ENCODE measurements at regions of chrX and their contacts with region 1.

Region 1: DNA sequence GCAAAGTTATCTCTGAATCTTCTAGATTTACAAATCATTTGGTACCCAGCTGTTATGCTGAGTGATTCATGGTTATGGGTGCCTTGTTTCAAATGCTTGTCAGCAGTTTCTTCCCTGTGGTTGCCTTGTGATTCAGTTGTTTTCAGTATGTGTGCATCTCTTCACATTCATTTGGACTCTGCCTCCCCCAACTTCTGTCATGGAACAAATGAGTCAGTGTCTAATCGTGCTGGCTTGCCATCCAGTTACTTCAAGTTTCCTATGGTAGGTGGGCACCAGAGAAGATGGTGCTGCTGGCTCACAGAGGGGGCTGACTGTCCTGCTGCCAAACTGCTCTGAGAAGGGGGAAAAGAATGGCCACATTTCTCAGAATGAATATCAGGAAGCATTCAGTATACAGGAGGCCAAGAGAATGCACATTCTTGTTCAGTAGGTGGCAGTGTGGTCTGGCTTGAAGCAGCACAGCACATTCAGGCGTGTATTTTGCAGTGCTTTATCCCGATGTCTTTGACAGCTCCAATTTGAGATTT is 260.9 kb downstream of the GLUD2 start:
- DNase-seq: peak in 1 of 3 donors; percentile 27
- ATAC-seq: peak; percentile 49
- H3K4me3 ChIP-seq: no peak overlapping the region
- H3K4me1 ChIP-seq: no peaks in the 10 kb centered on the region
- CTCF ChIP-seq: no peak

Region 2: DNA sequence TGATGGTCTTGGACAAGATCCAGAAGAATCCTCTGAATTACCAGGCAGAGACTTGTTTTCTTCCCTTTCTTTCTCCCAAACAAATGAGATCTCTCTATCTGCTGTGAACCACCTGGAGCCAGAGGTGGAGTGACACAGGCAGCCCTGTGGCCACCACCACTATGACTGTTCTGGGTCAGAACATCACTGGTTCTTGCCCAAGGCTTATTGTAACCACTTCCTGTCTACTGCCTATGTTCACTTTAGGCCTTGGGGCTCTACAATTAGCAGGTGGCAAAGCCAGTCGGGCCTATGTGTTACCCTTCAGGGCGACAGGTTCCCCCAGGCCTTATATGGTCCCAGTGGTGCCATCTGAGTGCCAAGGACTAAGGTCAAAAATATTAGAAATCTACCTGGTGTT is 99.8 kb before region 1 on chrX:
- intact Hi-C with region 1: no loop called
- DNase-seq: no peak
- ATAC-seq: no peak
- H3K4me3 ChIP-seq: no peak overlapping the region
- H3K4me1 ChIP-seq: no peaks in the 10 kb centered on the region
- CTCF ChIP-seq: no peak

Region 3: DNA sequence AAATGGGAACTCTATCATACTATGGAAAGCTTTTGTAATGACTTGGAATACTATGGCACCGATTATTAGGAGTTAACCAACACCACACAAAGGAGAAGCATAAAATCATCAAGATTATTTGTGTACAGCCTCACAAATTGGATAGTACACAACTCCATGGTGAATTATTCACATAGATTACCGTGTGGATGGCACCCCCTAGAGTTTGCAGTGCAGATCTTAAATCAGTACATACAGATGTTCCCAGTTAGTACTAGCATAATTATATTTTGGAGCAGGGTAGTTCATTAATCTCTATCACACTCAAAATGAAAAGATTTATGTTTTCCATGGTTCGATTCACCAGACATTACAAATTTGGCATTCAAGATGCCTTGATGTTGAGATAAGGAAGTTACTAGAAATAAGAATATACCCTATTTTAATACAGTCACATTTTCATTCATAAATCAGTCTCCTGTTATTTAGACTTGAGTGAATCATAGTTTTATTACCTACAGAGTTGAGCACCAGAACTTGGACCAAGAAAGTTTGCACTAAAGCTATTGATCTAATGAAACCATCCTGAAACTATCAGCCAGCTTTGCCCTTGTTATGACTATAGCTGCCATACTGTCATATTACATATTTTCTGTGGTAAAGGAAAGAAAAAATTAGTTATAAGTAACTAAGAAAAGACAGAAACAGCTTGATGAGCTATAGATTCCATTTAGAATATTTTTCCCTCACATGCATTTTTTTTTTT is 270.8 kb after region 1 on chrX:
- intact Hi-C with region 1: loop called in 1 of 2 experiments (anchors 10 kb)
- DNase-seq: peak in 1 of 3 donors; percentile 28
- ATAC-seq: no peak
- H3K4me3 ChIP-seq: no peak overlapping the region
- H3K4me1 ChIP-seq: no peaks in the 10 kb centered on the region
- CTCF ChIP-seq: no peak